ENCODE measurements at regions of chr13 and their contacts with region 1.

Region 1: DNA sequence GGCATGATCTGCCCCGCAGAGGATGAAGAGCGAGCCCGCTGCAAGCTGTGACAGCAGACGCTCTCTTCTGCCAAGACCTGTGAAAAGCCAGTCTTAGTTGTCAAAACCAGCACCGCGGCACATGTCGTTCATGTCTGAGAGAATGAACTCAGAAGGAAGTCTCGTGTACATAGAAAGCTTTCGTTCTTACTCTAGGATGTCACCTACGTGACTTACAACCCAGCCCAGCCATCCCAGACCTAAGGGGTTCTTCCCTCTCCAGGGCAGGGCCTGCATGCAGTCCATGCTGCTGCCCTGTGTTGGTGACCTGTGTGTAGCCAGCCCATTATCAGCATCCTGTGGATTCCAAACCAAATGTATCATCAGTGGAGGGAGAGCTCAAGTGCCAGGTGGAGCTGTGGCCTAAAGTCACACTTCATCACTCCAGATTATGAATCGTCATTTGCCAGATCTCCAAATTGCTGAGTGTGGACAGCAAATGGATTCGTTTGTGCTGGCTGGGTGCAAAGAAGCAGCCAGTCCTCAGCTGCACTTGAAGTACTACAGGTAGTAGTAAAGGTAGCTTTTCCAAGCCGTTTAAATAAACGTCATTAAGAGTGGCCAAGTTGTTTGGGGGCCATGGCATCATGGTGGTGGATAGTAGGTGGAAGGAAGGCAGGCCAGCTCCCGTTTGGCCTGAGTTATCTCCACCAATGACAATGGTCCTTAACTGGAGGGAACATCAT is 73.9 kb upstream of the GPR183 start:
- DNase-seq: peak in 6 of 10 donors; percentile 53 to 67 (median 60)
- ATAC-seq: peak; percentile 26 to 36
- H3K4me3 Mint-ChIP-seq: peak overlapping the region; percentile 20 to 84 (median 76)
- H3K27ac Mint-ChIP-seq: peak overlapping the region; percentile 96 to 100 (median 98)
- H3K4me1 Mint-ChIP-seq: peaks cover 49 to 97% (median 91%) of the 10 kb centered on the region in 4 donors
- H3K27me3 Mint-ChIP-seq: no peaks in the 10 kb centered on the region

Region 2: DNA sequence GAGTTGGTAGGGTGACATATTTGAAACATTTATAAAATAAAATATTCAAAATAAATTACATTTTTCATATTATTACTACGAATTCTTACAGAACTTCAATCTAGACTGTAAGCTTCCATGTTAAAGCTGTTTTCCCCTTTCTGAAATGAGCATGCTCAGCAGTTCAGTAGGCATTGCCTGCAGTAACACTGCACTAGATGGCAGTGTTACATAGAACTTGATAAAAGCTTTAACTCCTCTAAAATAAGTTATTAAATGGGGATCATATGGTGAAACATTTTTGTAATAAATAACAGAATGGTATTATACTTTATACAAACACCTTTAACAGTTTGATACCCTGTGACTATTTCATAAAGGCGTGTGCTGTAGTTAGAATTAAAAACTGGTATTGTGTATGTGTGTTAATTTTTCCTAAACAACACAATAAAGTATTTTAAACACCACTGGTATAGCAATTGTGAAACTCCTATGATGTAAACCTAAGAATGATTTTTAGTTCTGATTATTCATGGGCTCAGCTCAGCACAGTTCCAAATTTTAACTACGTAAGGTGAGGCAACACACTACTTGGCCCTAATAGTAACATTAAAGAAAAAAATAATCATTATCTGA is 111.3 kb before region 1 on chr13:
- POLR2A ChIA-PET with region 1: interaction called, 16 read pairs
- DNase-seq: peak in 4 of 10 donors; percentile 45 to 67 (median 56)
- ATAC-seq: peak; percentile 58 to 78
- H3K4me3 Mint-ChIP-seq: no peak overlapping the region
- H3K27ac Mint-ChIP-seq: peak overlapping the region; percentile 9 to 97 (median 78)
- H3K4me1 Mint-ChIP-seq: peaks cover 37 to 65% (median 64%) of the 10 kb centered on the region in 4 donors
- H3K27me3 Mint-ChIP-seq: no peaks in the 10 kb centered on the region

Region 3: DNA sequence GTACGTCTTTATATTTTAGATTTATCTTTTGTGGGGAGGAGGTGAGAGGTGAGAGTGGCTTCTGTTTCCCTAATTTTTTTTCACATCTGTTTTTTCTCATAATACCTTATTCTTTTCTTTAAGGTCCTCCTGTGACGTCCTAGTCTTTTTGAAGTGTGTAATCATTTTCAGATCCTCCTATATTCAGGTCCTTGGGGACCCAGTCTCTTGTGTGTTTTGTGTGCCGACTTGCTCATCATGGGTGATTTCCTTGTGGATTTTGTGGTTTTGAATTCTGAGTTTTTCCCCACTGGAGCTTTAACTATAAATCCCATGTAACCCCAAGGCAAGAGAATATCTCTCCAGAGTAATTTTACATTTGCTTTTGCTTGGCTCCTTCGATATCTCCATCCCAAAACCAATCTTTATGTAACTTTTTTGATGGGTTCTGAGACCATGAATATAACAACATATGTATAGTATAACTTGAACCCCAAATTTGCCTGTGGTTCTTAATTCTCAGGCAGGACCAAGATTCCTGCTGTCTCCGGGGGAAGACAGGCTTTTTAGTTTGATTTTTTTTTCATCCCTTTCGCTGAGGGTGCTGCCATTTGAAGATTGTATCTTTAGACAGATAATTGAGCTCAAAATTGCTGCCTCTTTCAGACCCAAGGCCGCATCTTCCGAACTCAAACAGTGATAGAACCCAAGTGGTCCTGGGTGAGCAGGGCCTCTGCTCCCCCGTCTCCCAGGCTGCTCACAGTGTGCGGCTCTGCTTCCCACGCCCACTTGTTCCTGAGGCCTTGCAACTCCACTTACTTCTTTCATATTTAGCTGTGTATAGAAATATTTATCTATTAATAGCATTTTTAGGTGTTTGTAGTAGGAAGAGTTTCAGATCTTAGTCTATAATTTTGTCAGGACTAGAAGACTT is 14.8 kb before region 1 on chr13:
- POLR2A ChIA-PET with region 1: interaction called, 98 read pairs
- DNase-seq: no peak
- ATAC-seq: peak in 1 of 2 donors; percentile 13
- H3K4me3 Mint-ChIP-seq: peak overlapping the region; percentile 0 to 77 (median 67)
- H3K27ac Mint-ChIP-seq: peak overlapping the region; percentile 87 to 99 (median 96)
- H3K4me1 Mint-ChIP-seq: peaks cover 51 to 94% (median 83%) of the 10 kb centered on the region in 4 donors
- H3K27me3 Mint-ChIP-seq: no peaks in the 10 kb centered on the region

Region 4: GRCh38 chr13:99404005-99404755 is 23.1 kb after region 1 on chr13:
- POLR2A ChIA-PET with region 1: no interaction called
- DNase-seq: peak in 1 of 10 donors; percentile 35
- ATAC-seq: no peak
- H3K4me3 Mint-ChIP-seq: peak overlapping the region in 3 of 10 donors; percentile 6 to 45 (median 18)
- H3K27ac Mint-ChIP-seq: peak overlapping the region in 7 of 10 donors; percentile 60 to 90 (median 74)
- H3K4me1 Mint-ChIP-seq: peaks cover 21 to 76% (median 34%) of the 10 kb centered on the region in 4 donors
- H3K27me3 Mint-ChIP-seq: no peaks in the 10 kb centered on the region

Region 5: GRCh38 chr13:99417201-99418102 is 36.4 kb after region 1 on chr13:
- POLR2A ChIA-PET with region 1: interaction called, 14 read pairs
- DNase-seq: peak in 7 of 10 donors; percentile 43 to 74 (median 58)
- ATAC-seq: peak; percentile 14 to 43
- H3K4me3 Mint-ChIP-seq: peak overlapping the region in 2 of 10 donors; percentile 42 to 44
- H3K27ac Mint-ChIP-seq: no peak overlapping the region
- H3K4me1 Mint-ChIP-seq: peaks cover 30 to 67% (median 35%) of the 10 kb centered on the region in 4 donors
- H3K27me3 Mint-ChIP-seq: no peaks in the 10 kb centered on the region